ENCODE measurements at regions of chr3 and their contacts with region 1.

Region 1: DNA sequence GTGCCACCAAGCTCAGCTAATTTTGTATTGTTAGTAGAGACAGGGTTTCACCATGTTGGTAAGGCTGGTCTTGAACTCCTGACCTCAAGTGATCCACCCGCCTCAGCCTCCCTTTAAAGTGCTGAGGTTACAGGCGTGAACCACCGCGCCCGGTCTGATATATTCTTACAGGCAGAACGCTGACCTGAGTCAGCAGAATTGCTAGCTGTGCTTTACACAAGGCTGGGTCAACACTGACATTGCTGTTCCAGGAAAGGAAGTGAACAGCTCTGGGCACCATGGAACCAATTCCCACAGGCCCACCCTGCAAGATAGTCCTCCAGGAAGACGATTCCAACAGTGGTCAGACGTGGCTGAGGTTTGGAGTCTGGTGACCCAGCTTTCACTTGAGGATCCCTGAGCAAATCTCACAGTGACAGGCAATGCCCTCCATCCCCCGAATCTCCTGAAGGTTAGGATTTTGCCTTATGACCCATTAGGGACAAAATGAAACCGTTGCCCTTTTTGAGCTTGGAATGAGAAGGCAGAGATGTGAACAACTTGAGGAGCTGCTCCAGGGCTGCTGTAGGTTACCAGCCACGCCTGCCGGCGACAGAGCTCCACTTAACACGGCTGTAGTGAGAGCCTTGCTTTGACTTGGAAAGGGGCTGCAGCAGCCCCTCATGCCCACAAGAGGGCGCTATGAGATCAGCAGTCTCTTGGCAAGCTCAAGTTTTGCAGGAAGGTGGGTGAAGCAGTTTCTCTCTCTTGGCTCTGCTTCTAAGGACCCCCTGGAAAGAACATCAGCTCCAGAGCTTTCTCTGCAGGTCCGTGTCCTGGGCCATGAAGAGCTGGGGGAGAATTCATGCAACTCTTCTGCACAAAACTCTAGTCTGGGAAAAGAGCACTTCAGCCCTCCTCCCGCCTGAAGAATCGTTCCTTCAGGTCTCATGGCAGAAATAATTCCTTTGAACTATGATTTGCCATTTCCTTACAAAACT is 74.1 kb downstream of the SENP2 start:
- DNase-seq: peak; percentile 85
- H3K4me3 Mint-ChIP-seq: no peak overlapping the region
- H3K27ac Mint-ChIP-seq: no peak overlapping the region
- H3K4me1 Mint-ChIP-seq: no peaks in the 10 kb centered on the region
- H3K27me3 Mint-ChIP-seq: peaks cover 7% of the 10 kb centered on the region

Region 2: GRCh38 chr3:185537369-185537970 is 122.8 kb before region 1 on chr3:
- CTCF ChIA-PET with region 1: no interaction called
- intact Hi-C with region 1: no loop called
- DNase-seq: peak; percentile 73
- H3K4me3 Mint-ChIP-seq: no peak overlapping the region
- H3K27ac Mint-ChIP-seq: peak overlapping the region; percentile 78
- H3K4me1 Mint-ChIP-seq: peaks cover 13% of the 10 kb centered on the region
- H3K27me3 Mint-ChIP-seq: no peaks in the 10 kb centered on the region

Region 3: GRCh38 chr3:185625784-185626183 is 34.4 kb before region 1 on chr3:
- CTCF ChIA-PET with region 1: no interaction called
- intact Hi-C with region 1: no loop called
- DNase-seq: no peak
- H3K4me3 Mint-ChIP-seq: no peak overlapping the region
- H3K27ac Mint-ChIP-seq: peak overlapping the region; percentile 41
- H3K4me1 Mint-ChIP-seq: no peaks in the 10 kb centered on the region
- H3K27me3 Mint-ChIP-seq: no peaks in the 10 kb centered on the region

Region 4: DNA sequence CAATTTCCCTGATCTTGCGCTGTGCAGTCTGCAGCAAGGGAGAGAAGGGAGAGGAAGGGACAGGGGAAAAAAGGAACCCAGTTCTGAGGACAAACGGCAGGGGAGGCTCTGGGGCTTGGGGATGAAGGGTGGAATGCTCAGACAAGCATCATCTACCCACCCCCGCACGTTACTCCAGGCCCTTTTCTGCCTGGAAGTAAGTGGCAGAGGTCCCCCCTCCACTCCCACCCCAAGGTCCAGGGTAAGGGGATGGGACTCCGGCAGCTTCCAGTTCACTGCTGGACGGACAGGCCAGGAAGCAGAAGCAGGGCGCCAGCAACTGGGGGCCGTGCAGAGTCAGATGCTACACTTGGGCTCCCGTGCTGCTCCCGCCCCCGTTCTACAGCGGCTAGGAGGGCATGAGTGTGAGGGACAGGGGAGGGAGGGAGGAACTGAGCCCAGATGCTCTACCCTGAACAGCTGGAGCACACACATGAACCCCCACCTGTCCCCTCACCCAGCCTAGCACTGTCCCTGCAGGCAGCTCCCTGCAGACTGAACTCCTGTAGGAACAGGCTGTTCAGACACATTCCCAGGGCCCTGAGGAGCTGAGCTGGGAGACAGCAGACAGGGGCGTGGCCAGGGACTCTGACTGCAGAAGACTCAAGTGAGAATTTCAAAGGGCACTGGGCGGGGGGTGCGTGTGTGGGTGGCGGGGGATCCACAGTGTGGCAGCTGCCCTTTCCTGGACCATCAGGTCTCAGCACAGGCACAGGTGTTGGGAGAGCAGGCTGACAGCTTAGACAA is 14.4 kb before region 1 on chr3:
- CTCF ChIA-PET with region 1: interaction called, 17 read pairs
- intact Hi-C with region 1: no loop called
- DNase-seq: no peak
- H3K4me3 Mint-ChIP-seq: no peak overlapping the region
- H3K27ac Mint-ChIP-seq: no peak overlapping the region
- H3K4me1 Mint-ChIP-seq: no peaks in the 10 kb centered on the region
- H3K27me3 Mint-ChIP-seq: peaks cover 8% of the 10 kb centered on the region

Region 5: GRCh38 chr3:185733980-185734724 is 73.9 kb after region 1 on chr3:
- CTCF ChIA-PET with region 1: interaction called, 10 read pairs
- intact Hi-C with region 1: no loop called
- DNase-seq: peak; percentile 50
- H3K4me3 Mint-ChIP-seq: no peak overlapping the region
- H3K27ac Mint-ChIP-seq: no peak overlapping the region
- H3K4me1 Mint-ChIP-seq: no peaks in the 10 kb centered on the region
- H3K27me3 Mint-ChIP-seq: peaks cover 5% of the 10 kb centered on the region

Region 6: GRCh38 chr3:185764163-185764979 is 104.1 kb after region 1 on chr3:
- CTCF ChIA-PET with region 1: interaction called, 91 read pairs
- intact Hi-C with region 1: loop called (anchors 1 kb)
- DNase-seq: no peak
- H3K4me3 Mint-ChIP-seq: no peak overlapping the region
- H3K27ac Mint-ChIP-seq: no peak overlapping the region
- H3K4me1 Mint-ChIP-seq: peaks cover 2% of the 10 kb centered on the region
- H3K27me3 Mint-ChIP-seq: peaks cover 34% of the 10 kb centered on the region

Region 7: GRCh38 chr3:185912929-185913901 is 253.0 kb after region 1 on chr3:
- CTCF ChIA-PET with region 1: interaction called, 11 read pairs
- intact Hi-C with region 1: no loop called
- DNase-seq: no peak
- H3K4me3 Mint-ChIP-seq: no peak overlapping the region
- H3K27ac Mint-ChIP-seq: peak overlapping the region; percentile 31
- H3K4me1 Mint-ChIP-seq: peaks cover 3% of the 10 kb centered on the region
- H3K27me3 Mint-ChIP-seq: no peaks in the 10 kb centered on the region

Region 8: DNA sequence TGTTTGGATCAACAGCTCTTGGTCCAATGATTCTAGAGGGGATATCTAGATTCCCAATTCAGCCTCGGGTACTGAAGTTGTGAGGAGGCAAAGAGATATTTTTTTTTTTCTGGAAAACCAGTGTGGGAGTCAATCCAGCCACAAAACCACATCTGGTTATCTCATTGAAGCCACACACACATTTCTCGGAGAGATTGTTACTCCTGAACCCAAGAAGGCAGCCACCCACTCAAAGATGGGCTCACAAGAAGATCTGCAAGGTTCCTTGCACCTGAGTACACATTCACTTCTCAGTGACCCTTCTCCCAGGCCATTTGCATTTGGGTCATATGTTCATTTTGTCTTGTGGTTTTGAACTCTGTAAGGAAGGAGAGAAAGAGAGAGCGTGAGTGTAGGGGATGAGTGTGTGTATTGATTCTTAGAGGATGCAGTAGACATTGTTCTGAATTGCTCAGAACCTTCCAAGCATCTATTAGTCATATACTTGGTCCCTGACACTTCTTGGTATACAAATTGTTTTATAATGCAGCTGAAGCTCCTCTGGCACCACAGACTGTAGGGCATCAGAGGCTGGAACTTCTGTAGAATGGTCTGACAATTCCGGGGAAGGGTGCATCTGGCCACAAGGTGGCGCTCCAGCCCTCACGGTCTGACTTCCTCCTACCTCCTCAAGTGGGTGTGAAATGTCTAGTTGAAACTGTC is 316.9 kb after region 1 on chr3:
- CTCF ChIA-PET with region 1: interaction called, 3 read pairs
- intact Hi-C with region 1: loop called (anchors 2 kb)
- DNase-seq: peak; percentile 94
- H3K4me3 Mint-ChIP-seq: no peak overlapping the region
- H3K27ac Mint-ChIP-seq: no peak overlapping the region
- H3K4me1 Mint-ChIP-seq: peaks cover 9% of the 10 kb centered on the region
- H3K27me3 Mint-ChIP-seq: no peaks in the 10 kb centered on the region

Measured in activated naive CD4-positive, alpha-beta T cell treated with anti-CD3 and anti-CD28 coated beads for 36 hours (primary cell).